Head of caudate nucleus (tissue), 42 donors: ENCODE measurements at regions of chr2 and their contacts with region 1.

Region 1: GRCh38 chr2:135709992-135710391 is 31.7 kb upstream of the UBXN4 start:
- DNase-seq: peak; percentile 4 to 90 (median 72)

Region 2: DNA sequence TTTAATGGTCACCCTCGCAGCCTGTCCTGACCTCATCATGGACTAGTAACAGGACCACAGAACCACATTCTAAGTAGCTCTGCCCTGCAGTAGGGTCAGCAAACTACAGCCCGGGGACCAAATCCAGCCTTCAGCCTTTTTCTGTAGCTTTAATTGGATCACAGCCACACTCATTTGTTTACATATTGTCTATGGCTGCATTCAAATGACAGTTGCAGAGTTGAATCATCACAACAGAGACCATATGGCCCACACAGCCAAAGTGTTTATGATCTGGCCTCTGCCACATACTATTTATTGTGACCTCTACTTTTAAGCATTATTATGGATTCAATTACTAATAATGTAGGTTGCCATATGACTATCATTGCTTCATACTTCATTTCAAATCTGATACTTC is 710.5 kb before region 1 on chr2:
- intact Hi-C with region 1: loop called (anchors 10 kb)
- DNase-seq: no peak

Region 3: DNA sequence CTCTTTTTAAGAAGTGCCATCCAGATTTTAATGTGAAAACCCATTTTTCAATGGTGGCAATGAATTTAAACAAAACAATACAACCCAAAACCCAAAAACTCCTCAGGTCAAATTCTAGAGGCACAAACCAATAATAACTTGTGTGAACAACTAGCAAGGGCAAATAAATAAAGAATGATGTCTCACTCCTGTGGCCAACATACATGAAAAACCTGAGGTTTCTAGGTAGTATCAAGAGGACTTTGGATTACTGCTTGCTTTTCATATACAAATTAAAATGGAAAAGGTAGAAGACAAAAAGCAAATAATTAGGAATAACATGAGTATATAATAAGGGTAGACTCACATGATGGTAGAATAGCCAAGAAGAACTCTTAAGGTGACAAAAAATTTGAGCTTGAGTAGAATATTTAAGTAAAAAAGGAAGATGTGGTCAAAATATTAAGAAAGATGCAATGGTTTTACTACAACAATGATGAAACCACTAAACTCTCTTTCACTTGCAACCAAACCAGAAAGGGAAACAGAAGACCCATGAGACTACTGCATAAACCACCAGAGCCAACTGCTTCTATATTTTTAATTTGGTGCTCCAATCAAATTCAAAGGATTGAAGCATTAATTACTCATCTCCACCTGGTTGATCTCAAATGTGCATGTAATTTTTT is 221.9 kb after region 1 on chr2:
- intact Hi-C with region 1: no loop called
- DNase-seq: no peak